Gastrocnemius medialis (tissue), 4 donors: ENCODE measurements at regions of chr12 and their contacts with region 1.

Region 1: GRCh38 chr12:6263931-6264330 is 46.6 kb upstream of the PLEKHG6 start:
- DNase-seq: no peak
- ATAC-seq: no peak
- H3K4me3 ChIP-seq: no peak overlapping the region
- H3K27ac ChIP-seq: no peak overlapping the region
- H3K4me1 ChIP-seq: peaks cover 0 to 4% of the 10 kb centered on the region in 2 donors
- H3K27me3 ChIP-seq: no peaks in the 10 kb centered on the region
- CTCF ChIP-seq: no peak
- POLR2A ChIP-seq: no peak

Region 2: DNA sequence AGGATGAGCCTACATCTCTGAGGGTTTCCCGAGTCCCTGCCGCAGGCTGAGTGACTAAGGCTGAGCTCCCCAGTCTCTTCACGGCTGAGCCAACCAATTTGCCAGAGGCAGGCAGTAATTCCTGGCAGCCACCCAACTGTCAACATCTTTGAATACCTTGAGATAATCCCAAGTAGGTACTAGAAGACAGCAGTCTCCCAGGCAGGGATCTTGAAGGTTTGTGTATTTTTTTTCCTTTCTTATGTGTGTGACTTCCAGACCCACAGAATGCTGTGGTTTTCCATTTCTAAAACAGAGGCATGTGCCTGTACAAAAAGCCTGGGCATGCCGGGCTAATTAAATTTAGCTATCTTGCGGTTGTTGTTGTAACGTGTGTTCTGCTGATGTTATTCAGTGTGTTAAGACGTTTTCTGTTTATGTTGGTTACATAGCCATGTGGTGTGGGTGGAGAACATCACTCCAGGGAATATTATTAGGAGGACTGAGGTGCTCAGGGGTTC is 474.4 kb before region 1 on chr12:
- in situ Hi-C with region 1: no loop called
- intact Hi-C with region 1: loop called (anchors 5 kb)
- DNase-seq: no peak
- ATAC-seq: no peak
- H3K4me3 ChIP-seq: no peak overlapping the region
- H3K27ac ChIP-seq: no peak overlapping the region
- H3K4me1 ChIP-seq: no peaks in the 10 kb centered on the region
- H3K27me3 ChIP-seq: no peaks in the 10 kb centered on the region
- CTCF ChIP-seq: no peak
- POLR2A ChIP-seq: no peak